ENCODE measurements at regions of chr10 and their contacts with region 1.

Region 1: DNA sequence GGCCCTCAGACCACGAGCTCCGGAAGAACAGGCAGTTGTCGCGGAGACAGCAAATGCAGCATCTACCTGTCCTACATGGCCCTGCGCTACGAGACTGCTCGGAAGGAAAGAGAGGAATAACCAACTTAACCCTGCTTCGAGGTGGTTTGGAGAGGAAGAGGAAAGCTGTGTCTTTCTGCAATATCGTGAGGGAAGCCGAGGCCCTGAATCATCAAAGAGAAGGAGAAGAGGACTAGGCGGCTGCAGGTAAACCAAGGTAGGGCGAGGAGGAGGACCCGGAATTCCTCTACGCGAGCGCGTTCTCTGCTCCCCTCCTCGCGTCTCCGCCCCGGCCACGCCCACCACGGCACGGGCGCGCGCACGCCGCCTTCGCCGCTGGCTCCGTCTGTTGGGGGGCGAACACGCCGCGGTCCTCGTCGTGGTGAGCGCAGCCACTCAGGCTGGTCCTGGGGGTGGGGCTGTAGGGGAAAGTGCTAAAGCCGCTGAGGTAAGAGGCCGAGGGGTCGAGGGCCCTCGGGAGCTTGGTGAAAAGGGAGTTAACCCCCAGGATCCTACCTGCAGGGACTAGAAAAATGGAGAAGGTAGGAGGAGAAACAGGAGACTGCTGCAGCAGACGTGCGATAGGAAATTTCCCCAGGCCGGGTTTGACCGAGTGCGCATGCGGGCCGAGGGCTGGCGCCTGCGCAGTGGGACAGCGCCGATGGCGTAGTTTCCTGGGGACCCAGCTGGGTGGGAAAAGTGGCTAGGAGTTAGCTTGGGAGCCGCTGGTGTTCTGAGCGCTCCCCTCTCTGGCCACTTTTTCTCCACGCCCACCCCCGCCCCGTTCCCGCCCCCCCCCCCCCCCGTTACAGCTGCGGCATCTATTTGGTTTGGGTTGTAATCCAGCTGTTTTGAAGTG is at the starts of genes ANAPC16 and ASCC1:
- DNase-seq: peak; percentile 94
- H3K4me3 ChIP-seq: peak within 1 kb of the TSS; percentile 82
- H3K27ac ChIP-seq: peak within 1 kb of the TSS; percentile 86
- H3K4me1 ChIP-seq: peaks cover 39% of the 10 kb centered on the region
- CTCF ChIP-seq: no peak
- total RNA-seq, gene ANAPC16: 48.4 and 68.0 TPM in 2 replicates
- total RNA-seq, gene ASCC1: 19.3 and 27.1 TPM in 2 replicates

Region 2: DNA sequence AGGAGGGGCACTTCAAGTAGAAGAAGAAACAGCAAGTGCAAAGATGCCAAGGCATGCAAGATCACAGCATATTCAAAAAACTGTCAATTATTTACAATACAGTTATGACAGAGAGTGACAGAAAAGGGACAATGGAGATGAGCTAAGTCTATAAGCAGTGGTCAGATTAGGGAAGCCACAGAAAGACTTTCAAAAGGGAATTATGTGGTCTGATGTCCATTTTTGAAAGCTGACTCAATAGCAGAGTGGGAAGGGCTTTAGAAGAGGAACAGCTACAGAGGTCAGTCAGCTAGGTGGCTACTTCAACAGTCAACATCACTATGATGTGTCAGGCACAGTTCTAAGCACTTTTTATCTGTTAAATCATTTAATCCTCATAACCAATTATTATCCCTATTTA is 82.4 kb before region 1 on chr10:
- CTCF ChIA-PET with region 1: no interaction called
- POLR2A ChIA-PET with region 1: no interaction called
- intact Hi-C with region 1: loop called (anchors 2 kb)
- DNase-seq: no peak
- H3K4me3 ChIP-seq: no peak overlapping the region
- H3K27ac ChIP-seq: no peak overlapping the region
- H3K4me1 ChIP-seq: peaks cover 18% of the 10 kb centered on the region
- CTCF ChIP-seq: no peak

Measured in OCI-LY7 (cell line).